PC-3 (cell line): ENCODE measurements at regions of chr18 and their contacts with region 1.

Region 1: DNA sequence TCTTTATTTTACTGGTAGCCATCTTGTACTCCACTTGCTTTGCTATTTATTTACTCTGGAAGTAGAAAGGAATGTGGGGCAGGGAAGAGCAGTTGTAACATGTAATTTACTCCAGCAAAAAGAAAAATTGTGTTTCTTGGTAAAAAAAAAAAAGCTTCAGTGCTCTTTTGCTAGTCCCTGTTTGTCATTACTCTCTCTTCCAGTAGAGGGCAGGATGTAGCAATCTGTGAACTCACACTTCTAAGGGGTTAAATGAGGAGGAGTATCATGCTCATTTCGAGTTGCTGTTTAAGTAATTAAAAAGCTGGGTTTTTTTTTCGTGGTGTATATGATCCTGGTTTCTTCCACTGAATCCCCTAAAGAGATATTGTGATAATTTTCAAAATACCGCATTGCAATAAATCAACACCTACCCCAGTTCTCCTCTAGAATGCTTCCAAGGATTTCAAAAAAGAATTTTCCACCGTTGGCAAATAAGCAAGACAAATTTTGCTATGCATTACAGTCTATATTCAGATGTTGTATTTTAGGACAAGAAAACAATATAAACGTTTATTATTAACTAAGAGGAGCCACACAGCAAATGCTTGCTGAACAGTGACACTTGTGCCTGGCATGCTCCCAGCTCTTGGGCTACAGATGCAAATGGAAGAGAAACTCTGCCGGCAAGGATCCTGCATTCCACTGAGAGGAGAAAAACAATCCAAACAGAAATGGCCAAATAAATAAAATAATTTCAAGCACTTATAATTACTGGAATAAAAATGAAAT is 261.6 kb downstream of the ASXL3 start:
- DNase-seq: peak; percentile 43
- ATAC-seq: no peak
- H3K4me3 ChIP-seq: no peak overlapping the region
- H3K27ac ChIP-seq: no peak overlapping the region
- H3K4me1 ChIP-seq: no peaks in the 10 kb centered on the region
- H3K27me3 ChIP-seq: no peaks in the 10 kb centered on the region
- CTCF ChIP-seq: peak; percentile 64

Region 2: DNA sequence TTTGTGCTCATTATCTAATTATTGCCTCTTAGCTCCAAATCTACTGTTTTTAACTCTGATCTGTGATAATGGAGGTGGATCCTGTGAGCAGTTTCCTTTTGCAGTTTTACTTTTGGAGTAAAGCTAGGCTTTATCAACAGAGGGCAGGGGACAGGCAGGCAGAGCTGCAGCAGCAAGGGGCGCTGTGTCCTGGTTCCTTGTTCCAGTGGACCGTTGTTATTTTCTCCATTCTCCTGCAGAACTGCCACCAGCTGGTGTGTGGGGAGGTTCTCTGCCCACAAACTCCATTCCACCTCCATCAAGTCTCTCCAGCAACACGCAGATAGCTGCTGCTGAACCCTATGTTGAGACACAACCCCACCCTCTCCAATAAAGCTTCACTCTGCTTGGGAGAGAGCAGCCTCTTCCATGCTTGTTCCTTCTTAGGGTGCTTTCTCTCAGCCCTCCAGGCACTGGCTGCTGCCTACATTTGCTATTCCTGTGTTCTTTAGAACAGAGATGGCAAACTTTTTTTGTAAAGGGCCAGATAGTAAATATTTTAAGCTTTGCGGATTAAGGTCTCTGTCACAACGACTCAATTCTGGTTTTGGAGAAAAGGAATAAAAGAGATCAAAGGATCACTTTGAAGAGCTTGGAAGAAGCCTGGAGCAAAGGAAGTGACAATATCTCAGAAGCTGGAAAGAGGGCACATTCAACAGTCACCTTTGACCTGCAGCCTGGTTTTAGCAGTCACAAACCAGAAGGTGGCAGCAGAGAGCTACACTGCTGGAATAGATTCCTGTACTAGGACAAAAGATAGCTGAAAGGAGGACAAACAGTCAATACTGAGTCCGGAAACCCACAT is 607.9 kb before region 1 on chr18:
- CTCF ChIA-PET with region 1: no interaction called
- POLR2A ChIA-PET with region 1: no interaction called
- intact Hi-C with region 1: no loop called
- DNase-seq: peak; percentile 55
- ATAC-seq: peak; percentile 62
- H3K4me3 ChIP-seq: no peak overlapping the region
- H3K27ac ChIP-seq: no peak overlapping the region
- H3K4me1 ChIP-seq: no peaks in the 10 kb centered on the region
- H3K27me3 ChIP-seq: no peaks in the 10 kb centered on the region
- CTCF ChIP-seq: peak; percentile 68

Region 3: DNA sequence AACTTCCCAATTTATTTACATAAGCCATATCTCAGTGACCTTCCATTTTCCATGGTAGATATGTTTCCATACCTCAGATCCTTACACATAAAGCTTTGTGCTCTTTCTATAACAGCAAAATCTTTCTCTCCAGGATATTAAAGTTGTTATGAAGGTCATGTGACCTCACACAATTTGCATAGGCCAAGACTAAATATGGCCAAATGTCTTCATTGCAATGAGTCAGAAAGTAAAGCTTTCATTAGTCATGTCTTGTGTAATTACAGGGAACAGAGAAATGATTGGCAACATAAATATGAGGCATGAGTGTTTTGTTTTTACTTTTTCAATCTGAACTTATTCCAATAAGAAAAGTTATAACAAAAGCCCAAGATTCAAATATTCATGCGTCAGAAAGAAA is 18.1 kb before region 1 on chr18:
- CTCF ChIA-PET with region 1: no interaction called
- POLR2A ChIA-PET with region 1: no interaction called
- intact Hi-C with region 1: no loop called
- DNase-seq: peak; percentile 39
- ATAC-seq: peak; percentile 73
- H3K4me3 ChIP-seq: no peak overlapping the region
- H3K27ac ChIP-seq: no peak overlapping the region
- H3K4me1 ChIP-seq: no peaks in the 10 kb centered on the region
- H3K27me3 ChIP-seq: no peaks in the 10 kb centered on the region
- CTCF ChIP-seq: no peak

Region 4: DNA sequence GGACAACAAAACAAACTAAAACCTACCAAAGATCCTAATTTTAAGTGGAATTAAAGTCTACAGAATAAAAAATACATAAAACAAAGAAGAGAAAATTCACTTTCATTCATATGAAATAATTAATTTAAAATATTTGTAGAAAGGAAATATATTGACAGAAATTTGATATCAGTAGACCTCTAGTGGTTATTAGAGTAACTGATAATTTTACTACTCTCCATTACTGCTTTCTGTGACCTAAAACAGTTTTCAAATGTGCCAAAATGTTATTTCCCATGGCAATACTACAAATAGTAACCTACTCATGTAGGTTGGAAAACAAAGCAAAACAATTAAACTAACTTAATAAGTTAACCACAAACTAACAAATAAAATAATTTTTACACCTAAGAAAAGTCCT is 238.0 kb after region 1 on chr18:
- CTCF ChIA-PET with region 1: no interaction called
- POLR2A ChIA-PET with region 1: no interaction called
- intact Hi-C with region 1: loop called (anchors 5 kb)
- DNase-seq: no peak
- ATAC-seq: no peak
- H3K4me3 ChIP-seq: no peak overlapping the region
- H3K27ac ChIP-seq: no peak overlapping the region
- H3K4me1 ChIP-seq: no peaks in the 10 kb centered on the region
- H3K27me3 ChIP-seq: no peaks in the 10 kb centered on the region
- CTCF ChIP-seq: no peak

Region 5: DNA sequence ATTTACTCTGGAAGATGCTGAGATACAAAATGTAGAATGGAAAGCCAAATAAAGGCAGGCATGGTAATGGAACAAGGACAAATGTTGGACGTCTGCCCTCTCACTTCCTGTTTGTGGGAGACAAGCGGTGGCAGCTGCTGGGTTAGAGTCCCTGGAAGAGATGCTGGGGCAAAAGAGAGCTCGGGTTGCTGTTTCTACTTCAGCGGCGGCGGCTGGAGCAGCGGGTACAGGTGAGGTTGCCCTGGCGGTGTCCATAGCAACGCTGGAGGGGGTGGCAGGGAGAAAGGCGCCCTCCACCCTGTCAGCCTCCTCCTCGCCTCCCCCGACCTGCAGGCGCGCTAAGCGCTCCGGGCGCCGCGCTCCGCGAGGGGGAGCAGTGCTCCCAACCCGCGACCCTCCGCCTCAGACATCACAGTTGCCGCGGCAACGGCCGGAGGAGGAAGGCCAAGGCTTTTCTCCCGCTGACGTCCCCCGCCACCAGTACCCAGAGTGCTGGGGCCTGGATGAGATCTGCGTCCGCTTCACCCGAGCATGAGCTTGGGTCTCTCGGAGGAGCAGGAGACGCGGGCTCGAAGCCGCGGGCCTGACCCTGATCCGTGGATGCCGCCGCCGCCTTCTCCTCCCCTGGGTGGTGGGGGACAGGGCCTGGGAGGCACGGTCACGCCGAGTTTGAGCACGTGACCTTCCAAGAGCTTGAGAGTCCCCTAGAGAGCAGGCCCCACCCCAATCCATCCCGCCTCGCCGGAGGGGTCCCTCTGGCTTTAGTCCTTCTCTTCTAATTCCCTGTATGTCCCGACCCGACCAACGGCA is 319.5 kb after region 1 on chr18:
- CTCF ChIA-PET with region 1: no interaction called
- POLR2A ChIA-PET with region 1: no interaction called
- intact Hi-C with region 1: no loop called
- DNase-seq: no peak
- ATAC-seq: no peak
- H3K4me3 ChIP-seq: no peak overlapping the region
- H3K27ac ChIP-seq: no peak overlapping the region
- H3K4me1 ChIP-seq: no peaks in the 10 kb centered on the region
- H3K27me3 ChIP-seq: no peaks in the 10 kb centered on the region
- CTCF ChIP-seq: no peak

Region 6: GRCh38 chr18:34322365-34323289 is 483.0 kb after region 1 on chr18:
- CTCF ChIA-PET with region 1: no interaction called
- POLR2A ChIA-PET with region 1: no interaction called
- intact Hi-C with region 1: loop called (anchors 10 kb)
- DNase-seq: peak; percentile 41
- ATAC-seq: no peak
- H3K4me3 ChIP-seq: no peak overlapping the region
- H3K27ac ChIP-seq: no peak overlapping the region
- H3K4me1 ChIP-seq: no peaks in the 10 kb centered on the region
- H3K27me3 ChIP-seq: no peaks in the 10 kb centered on the region
- CTCF ChIP-seq: peak; percentile 58